ENCODE measurements at regions of chr1 and their contacts with region 1.

Region 1: DNA sequence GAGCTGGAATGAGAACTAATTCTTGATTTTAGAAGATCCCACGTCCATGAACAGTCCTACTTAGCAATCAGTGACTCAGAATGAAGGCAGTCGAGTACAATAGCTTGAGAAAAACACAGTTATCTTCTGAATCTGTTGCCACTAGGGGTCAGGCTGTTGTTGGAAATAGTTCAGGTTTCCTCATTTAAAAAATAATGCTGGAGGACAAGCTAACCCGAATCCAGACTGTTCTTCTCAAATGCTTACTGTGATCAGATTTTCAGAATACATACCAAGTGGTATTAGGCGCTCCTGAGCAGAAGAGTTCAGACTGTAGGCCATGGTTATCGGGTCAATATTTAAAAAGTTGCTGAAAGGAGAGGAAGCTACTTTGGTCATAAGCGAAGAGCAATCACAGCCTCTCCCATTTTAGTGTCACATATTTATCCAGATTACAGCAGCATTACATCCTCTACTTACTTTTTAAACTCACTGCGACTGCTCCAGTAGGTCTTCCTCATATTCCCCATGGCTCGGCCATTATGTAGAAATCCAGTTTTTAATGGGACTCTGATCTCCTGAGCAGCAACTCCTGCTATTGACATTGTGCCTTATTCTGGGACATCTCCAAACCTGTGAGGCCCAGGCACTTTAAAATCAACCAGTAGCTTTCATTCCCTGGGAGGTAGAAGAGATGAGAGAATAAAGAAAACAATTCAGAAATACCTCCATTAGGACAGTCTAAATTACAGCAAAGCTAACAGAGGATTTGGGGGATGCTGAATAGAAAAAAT is 10.9 kb downstream of the ERRFI1 start:
- DNase-seq: peak; percentile 26
- ATAC-seq: peak; percentile 91
- H3K4me3 ChIP-seq: no peak overlapping the region
- H3K27ac ChIP-seq: no peak overlapping the region
- H3K4me1 ChIP-seq: no peaks in the 10 kb centered on the region
- H3K27me3 ChIP-seq: no peaks in the 10 kb centered on the region
- CTCF ChIP-seq: peak; percentile 58 to 78 (median 64)
- EP300 ChIP-seq: no peak
- POLR2A ChIP-seq: no peak
- RAD21 ChIP-seq: peak; percentile 76

Region 2: GRCh38 chr1:7975212-7975865 is 39.9 kb before region 1 on chr1:
- CTCF ChIA-PET with region 1: interaction called, 263 read pairs
- POLR2A ChIA-PET with region 1: interaction called, 3 read pairs
- RAD21 ChIA-PET with region 1: interaction called, 15 read pairs
- SMC1A ChIA-PET with region 1: interaction called, 79 read pairs
- in situ Hi-C with region 1: no loop called
- intact Hi-C with region 1: loop called (anchors 5 kb)
- DNase-seq: no peak
- ATAC-seq: peak; percentile 94
- H3K4me3 ChIP-seq: no peak overlapping the region
- H3K27ac ChIP-seq: no peak overlapping the region
- H3K4me1 ChIP-seq: no peaks in the 10 kb centered on the region
- H3K27me3 ChIP-seq: no peaks in the 10 kb centered on the region
- CTCF ChIP-seq: peak; percentile 72 to 81 (median 73)
- EP300 ChIP-seq: no peak
- POLR2A ChIP-seq: no peak
- RAD21 ChIP-seq: peak; percentile 58

Region 3: GRCh38 chr1:7993593-7994479 is 21.4 kb before region 1 on chr1:
- CTCF ChIA-PET with region 1: interaction called, 11 read pairs
- POLR2A ChIA-PET with region 1: no interaction called
- RAD21 ChIA-PET with region 1: interaction called, 6 read pairs
- SMC1A ChIA-PET with region 1: interaction called, 6 read pairs
- in situ Hi-C with region 1: no loop called
- intact Hi-C with region 1: no loop called
- DNase-seq: peak; percentile 94
- ATAC-seq: peak; percentile 97
- H3K4me3 ChIP-seq: peak overlapping the region; percentile 30; the same call in 1 of the 2 replicates
- H3K27ac ChIP-seq: peak overlapping the region; percentile 87
- H3K4me1 ChIP-seq: peaks cover 19% of the 10 kb centered on the region
- H3K27me3 ChIP-seq: no peaks in the 10 kb centered on the region
- CTCF ChIP-seq: no peak
- EP300 ChIP-seq: peak in 1 of 2 experiments; percentile 81; a peak in 1 of 4 replicates
- POLR2A ChIP-seq: no peak
- RAD21 ChIP-seq: no peak

Region 4: DNA sequence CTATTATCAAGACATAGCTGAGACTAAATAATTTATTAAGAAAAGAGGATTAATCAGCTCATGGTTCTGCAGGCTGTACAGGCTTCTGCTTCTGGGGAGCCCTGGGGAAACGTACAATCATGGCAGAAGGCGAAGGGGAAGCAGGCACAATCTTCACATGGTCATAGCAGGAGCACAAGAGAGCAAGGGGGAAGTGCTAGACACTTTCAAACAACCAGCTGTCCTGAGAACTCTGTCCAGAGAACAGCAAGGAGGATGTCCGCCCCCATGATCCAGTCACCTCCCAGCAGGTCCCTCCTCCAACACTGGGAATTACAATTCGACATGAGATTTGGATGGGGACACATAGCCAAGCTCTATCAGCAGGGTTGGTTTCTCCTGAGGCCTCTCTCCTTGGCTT is 292.4 kb after region 1 on chr1:
- CTCF ChIA-PET with region 1: interaction called, 161 read pairs
- POLR2A ChIA-PET with region 1: no interaction called
- RAD21 ChIA-PET with region 1: interaction called, 96 read pairs
- SMC1A ChIA-PET with region 1: interaction called, 47 read pairs
- in situ Hi-C with region 1: loop called (anchors 5 kb)
- intact Hi-C with region 1: no loop called
- DNase-seq: no peak
- ATAC-seq: no peak
- H3K4me3 ChIP-seq: no peak overlapping the region
- H3K27ac ChIP-seq: no peak overlapping the region
- H3K4me1 ChIP-seq: no peaks in the 10 kb centered on the region
- H3K27me3 ChIP-seq: no peaks in the 10 kb centered on the region
- CTCF ChIP-seq: no peak
- EP300 ChIP-seq: no peak
- POLR2A ChIP-seq: no peak
- RAD21 ChIP-seq: no peak

Region 5: GRCh38 chr1:8348777-8349491 is 333.7 kb after region 1 on chr1:
- CTCF ChIA-PET with region 1: interaction called, 76 read pairs
- POLR2A ChIA-PET with region 1: no interaction called
- RAD21 ChIA-PET with region 1: interaction called, 20 read pairs
- SMC1A ChIA-PET with region 1: interaction called, 16 read pairs
- in situ Hi-C with region 1: loop called (anchors 10 kb)
- intact Hi-C with region 1: loop called (anchors 1 kb)
- DNase-seq: no peak
- ATAC-seq: peak; percentile 88
- H3K4me3 ChIP-seq: no peak overlapping the region
- H3K27ac ChIP-seq: no peak overlapping the region
- H3K4me1 ChIP-seq: no peaks in the 10 kb centered on the region
- H3K27me3 ChIP-seq: no peaks in the 10 kb centered on the region
- CTCF ChIP-seq: peak; percentile 70 to 91 (median 78)
- EP300 ChIP-seq: no peak
- POLR2A ChIP-seq: no peak
- RAD21 ChIP-seq: peak; percentile 86